ENCODE measurements at regions of chr17 and their contacts with region 1.

Region 1: DNA sequence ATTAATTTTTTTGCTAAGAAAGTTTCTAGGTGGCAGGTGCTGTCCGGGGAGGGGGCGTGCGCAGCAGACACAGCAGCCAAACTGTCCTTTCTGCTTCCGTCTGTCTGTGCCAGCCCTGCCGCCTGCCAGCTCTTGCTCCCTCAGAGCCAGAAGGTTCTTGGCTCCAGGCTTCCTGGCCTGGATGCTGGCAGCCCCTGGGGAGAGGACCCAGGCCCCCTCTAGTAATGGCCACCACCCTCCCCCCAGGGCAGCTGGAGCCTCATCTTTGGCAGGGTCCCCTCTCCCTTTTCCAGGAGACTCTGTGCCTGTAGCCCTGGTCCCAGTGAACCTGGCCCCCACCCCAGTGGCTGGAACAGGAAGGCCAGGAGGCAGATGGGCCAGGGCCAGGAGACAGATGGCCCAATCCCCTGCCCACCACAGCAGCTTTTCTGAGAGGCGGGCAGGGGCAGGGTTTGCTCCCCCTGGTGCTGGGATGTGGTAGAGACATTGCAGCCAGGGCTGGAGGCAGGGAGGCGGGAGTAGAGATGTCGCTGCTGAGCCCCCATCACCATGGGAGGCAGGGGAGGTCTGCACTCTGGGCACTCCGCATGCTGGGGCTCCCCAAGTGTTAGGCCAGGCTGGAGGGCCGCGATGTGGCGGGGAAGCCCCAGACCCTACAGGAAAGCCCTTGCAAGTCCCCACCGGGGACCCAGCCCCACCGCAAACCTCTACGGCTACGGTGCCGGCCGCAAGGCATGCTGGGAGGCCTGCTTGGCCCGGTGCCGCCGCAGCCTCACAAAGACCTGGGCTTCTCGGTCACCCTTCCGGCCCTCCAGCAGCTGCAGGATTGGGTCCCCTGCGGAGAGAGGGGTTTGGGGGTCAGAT is 16.7 kb downstream of the UNC13D start:
- DNase-seq: peak; percentile 89
- CTCF ChIP-seq: peak; percentile 72

Region 2: DNA sequence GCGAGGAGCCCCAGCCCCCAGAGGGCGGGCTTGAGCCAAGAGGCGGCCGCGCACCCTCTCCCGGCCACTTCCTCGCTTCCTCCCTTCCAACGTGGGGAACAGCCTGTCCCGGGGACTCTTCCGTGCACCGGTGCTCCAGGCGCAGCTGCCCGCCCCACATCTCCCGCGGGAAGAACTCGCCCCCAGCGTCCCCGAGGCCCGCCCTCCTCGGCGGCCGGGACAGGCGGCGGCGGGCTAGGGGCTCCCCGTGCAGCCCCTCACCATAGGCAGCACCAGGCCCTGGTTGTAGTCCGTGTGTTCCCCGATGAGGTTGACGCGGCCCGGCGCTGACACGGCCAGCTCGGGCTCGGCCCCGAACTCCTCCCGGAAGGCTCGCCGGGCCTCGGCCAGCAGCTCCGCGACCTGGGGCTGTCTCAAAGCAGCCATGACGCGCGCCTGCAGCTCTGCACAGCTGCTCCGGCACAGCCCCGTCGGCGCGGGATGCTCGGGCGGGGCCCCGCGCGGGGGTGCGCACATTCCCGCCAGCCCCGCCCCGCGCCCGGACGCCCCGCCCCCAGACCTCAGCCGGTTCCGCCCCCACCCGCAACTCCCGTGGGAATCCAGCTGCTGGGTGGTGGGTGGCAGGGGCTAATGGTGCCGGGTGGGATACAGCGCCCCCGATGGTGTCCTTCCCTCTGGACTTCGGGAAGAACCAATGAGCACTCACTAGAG is 62.6 kb before region 1 on chr17 and contains the start of gene GALK1:
- CTCF ChIA-PET with region 1: interaction called, 58 read pairs
- POLR2A ChIA-PET with region 1: no interaction called
- DNase-seq: peak; percentile 89
- CTCF ChIP-seq: peak; percentile 88

Region 3: DNA sequence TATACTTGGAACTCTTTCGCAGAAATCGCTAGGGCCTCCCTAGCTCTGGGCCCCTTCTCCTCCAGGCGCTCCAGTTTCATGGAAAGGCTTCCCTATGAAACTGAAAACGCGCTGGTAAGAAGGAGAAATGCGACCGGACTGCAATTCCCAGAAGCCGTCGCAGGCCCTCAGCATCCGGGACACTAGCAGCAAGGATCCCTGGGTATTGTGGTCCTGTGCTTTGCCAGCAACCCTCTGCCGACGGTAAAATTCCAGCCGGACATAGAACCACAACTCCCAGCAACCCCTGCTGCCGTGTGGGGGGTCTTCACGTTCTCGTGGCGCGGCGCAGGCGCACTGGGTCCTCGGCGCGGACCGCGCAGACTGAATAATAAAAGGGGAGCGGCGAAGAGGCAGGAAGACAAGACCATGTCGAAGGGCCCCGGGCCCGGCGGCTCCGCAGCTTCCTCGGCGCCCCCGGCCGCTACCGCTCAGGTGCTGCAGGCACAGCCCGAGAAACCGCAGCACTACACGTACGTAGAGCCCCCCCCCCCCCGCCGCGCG is 42.9 kb before region 1 on chr17 and contains the start of gene UNK:
- CTCF ChIA-PET with region 1: interaction called, 35 read pairs
- POLR2A ChIA-PET with region 1: interaction called, 13 read pairs
- DNase-seq: peak; percentile 94
- CTCF ChIP-seq: no peak

Region 4: GRCh38 chr17:75799398-75799797 is 28.1 kb before region 1 on chr17:
- CTCF ChIA-PET with region 1: interaction called, 30 read pairs
- POLR2A ChIA-PET with region 1: no interaction called
- DNase-seq: no peak
- CTCF ChIP-seq: peak; percentile 3

Region 5: DNA sequence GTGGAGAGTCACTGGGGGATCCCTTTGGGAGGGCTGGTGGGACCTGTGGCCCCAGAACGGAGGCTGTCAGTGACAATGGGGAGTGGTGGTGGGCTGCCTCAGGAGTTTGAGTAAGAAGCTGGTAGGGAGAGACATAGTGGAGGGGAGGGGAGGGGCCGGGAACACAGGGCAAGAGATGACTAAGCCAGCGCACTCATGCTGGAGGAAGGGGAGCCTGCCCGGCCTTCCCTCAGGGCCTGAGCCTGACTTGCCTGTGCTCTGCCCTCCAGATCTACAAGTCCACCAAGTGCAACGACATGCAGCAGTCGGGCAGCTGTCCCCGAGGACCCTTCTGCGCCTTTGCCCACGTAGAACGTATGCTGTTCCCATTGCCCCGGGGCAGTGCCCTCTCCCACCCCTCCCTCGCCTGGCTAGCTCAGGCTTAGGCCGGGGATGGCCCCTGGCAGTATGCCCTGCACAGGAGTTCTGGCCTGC is 12.5 kb before region 1 on chr17:
- CTCF ChIA-PET with region 1: interaction called, 56 read pairs
- POLR2A ChIA-PET with region 1: interaction called, 5 read pairs
- DNase-seq: no peak
- CTCF ChIP-seq: no peak

Region 6: DNA sequence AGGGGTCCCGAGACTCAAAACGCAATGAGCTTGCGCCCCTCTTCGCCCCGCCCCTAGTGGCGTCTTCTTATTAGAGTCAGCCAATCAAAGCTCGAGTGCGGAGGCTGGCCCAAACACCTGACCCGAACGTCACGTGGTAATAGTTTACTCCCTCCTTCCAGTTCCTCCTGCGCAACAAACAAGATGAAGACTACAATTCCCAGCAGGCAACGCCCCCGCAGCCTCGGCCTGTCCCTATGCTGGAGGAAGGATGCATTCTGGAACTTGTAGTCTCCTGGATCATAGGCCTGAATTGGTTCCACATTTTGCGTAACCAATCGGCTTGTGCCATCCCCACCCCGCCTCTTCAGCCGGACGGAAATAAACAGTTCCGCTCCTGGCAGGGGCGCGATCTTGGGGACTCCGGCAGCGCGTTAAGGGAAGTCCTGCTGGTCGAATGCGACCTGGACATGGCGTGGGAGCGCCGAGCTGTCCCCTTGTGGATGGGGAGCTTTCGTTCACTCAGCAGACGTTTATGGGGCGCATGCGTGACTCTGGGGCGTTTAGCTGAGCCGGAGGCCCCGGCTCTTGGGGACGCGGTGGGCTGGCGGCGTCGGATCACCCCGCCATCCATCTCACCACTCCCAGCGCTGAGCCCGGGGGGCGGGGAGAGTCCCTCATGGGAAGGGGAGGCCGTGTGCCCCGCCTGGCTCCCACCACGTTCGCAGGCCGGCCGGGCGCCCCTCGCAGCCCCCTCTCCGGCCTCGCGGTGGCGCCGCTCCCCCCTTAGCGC is 28.0 kb after region 1 on chr17 and contains the start of gene WBP2:
- CTCF ChIA-PET with region 1: interaction called, 135 read pairs
- POLR2A ChIA-PET with region 1: no interaction called
- DNase-seq: peak; percentile 97
- CTCF ChIP-seq: peak; percentile 53

Measured in GM10248 (cell line).